Activated CD8-positive, alpha-beta T cell treated with anti-CD3 and anti-CD28 coated beads for 36 hours (primary cell): ENCODE measurements at regions of chr10 and their contacts with region 1.

Region 1: GRCh38 chr10:102476466-102477141 is 25.3 kb upstream of the C10orf95 start:
- DNase-seq: peak; percentile 35
- ATAC-seq: no peak
- H3K4me3 Mint-ChIP-seq: no peak overlapping the region
- H3K27ac Mint-ChIP-seq: peak overlapping the region; percentile 77
- H3K4me1 Mint-ChIP-seq: peaks cover 29% of the 10 kb centered on the region
- H3K27me3 Mint-ChIP-seq: no peaks in the 10 kb centered on the region
- CTCF ChIP-seq: no peak

Region 2: GRCh38 chr10:102384053-102384452 is 92.6 kb before region 1 on chr10:
- CTCF ChIA-PET with region 1: interaction called, 26 read pairs
- POLR2A ChIA-PET with region 1: interaction called, 4 read pairs
- intact Hi-C with region 1: no loop called
- DNase-seq: peak; percentile 49
- ATAC-seq: peak; percentile 49
- H3K4me3 Mint-ChIP-seq: no peak overlapping the region
- H3K27ac Mint-ChIP-seq: no peak overlapping the region
- H3K4me1 Mint-ChIP-seq: peaks cover 3% of the 10 kb centered on the region
- H3K27me3 Mint-ChIP-seq: no peaks in the 10 kb centered on the region
- CTCF ChIP-seq: peak; percentile 29

Region 3: DNA sequence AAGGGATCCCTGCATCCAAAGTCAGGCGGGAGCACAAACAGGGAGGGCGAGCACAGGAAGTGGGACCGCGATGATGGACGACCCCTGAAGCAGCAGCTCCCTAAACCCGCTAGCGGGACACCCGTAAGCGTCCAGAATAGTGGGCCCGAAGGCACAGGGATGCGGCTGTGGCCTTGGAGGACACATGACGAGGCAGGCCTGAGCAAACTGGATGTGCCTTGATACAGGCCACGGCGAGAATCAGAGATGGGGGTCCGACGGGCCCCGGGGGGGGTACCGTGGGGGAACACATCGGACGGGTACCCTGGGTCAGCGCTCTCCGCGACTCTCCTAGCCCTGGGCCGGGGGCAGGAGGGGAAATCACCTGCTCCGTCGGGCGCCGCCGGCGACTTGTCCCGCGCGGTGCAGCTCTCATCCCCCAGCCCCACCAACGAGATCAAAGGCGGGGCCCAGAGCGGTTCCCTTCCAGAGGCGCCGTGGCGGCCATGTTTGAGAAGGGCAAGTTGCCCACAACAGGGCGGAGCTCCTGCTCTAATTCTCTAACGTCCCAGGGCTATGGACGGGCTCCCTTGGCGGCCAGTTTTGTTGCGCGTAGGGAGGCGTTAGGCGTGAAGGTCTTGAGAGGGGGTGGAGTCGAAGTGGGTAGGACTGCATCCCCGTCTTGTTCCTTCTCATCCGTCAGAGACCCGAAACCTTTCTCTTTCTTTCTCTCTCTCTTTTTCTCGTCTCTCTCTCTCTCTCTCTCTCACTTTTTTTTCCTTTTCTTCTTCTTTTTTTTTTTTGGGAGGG is 44.2 kb before region 1 on chr10 and contains the start of gene CUEDC2:
- CTCF ChIA-PET with region 1: interaction called, 14 read pairs
- POLR2A ChIA-PET with region 1: interaction called, 5 read pairs
- intact Hi-C with region 1: no loop called
- DNase-seq: peak; percentile 98
- ATAC-seq: peak; percentile 93
- H3K4me3 Mint-ChIP-seq: peak within 1 kb of the TSS; percentile 95
- H3K27ac Mint-ChIP-seq: peak within 1 kb of the TSS; percentile 94
- H3K4me1 Mint-ChIP-seq: peaks cover 42% of the 10 kb centered on the region
- H3K27me3 Mint-ChIP-seq: no peaks in the 10 kb centered on the region
- CTCF ChIP-seq: no peak
- total RNA-seq, gene CUEDC2: 71.8 to 76.4 TPM

Region 4: GRCh38 chr10:102461187-102462054 is 15.2 kb before region 1 on chr10:
- CTCF ChIA-PET with region 1: interaction called, 40 read pairs
- POLR2A ChIA-PET with region 1: interaction called, 7 read pairs
- intact Hi-C with region 1: no loop called
- DNase-seq: peak; percentile 95
- ATAC-seq: peak; percentile 96
- H3K4me3 Mint-ChIP-seq: peak overlapping the region; percentile 91
- H3K27ac Mint-ChIP-seq: peak overlapping the region; percentile 80
- H3K4me1 Mint-ChIP-seq: peaks cover 27% of the 10 kb centered on the region
- H3K27me3 Mint-ChIP-seq: no peaks in the 10 kb centered on the region
- CTCF ChIP-seq: no peak

Region 5: DNA sequence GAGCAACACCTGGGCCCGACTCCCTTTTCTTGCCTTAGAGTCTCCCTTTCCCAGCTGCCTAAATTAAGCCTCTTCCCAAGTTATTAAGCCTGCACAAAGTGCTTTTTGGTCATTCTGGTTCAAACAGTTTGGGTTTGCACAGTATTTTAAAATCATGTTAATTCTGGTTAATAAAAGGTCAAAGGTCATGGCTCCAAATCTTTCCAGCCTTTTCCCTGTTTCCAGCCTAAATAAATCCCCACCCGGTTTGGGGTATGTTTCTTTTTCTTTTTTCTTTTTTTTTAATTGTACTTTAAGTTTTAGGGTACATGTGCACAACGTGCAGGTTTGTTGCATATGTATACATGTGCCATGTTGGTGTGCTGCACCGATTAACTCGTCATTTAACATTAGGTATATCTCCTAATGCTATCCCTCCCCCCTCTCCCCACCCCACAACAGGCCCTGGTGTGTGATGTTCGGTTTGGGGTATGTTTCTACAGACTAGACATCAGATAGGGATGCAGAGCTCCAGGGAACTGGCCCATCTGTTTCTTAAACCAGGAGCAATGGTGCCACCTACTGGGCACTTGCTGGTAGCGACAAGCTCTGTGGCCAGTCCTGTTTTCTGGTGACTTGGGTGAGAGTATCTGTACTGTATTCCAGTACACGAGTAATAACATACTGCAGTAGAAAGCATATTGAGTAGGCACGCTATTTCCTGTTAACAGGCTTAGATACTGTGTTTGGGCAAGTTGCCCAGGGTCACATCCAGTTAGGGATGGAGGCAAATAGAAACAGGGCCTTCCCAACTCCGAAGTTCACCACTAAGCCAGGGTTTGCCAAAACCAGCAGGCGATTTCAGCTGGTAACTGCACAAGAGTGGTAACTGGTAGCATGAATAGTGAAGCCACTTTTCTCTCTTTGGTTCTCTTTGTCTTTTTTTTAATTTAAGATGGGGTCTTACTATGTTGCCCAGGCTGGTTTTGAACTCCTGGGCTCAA is 107.1 kb after region 1 on chr10:
- CTCF ChIA-PET with region 1: interaction called, 10 read pairs
- POLR2A ChIA-PET with region 1: no interaction called
- intact Hi-C with region 1: no loop called
- DNase-seq: peak; percentile 92
- ATAC-seq: peak; percentile 99
- H3K4me3 Mint-ChIP-seq: no peak overlapping the region
- H3K27ac Mint-ChIP-seq: no peak overlapping the region
- H3K4me1 Mint-ChIP-seq: peaks cover 4% of the 10 kb centered on the region
- H3K27me3 Mint-ChIP-seq: no peaks in the 10 kb centered on the region
- CTCF ChIP-seq: peak; percentile 91

Region 6: DNA sequence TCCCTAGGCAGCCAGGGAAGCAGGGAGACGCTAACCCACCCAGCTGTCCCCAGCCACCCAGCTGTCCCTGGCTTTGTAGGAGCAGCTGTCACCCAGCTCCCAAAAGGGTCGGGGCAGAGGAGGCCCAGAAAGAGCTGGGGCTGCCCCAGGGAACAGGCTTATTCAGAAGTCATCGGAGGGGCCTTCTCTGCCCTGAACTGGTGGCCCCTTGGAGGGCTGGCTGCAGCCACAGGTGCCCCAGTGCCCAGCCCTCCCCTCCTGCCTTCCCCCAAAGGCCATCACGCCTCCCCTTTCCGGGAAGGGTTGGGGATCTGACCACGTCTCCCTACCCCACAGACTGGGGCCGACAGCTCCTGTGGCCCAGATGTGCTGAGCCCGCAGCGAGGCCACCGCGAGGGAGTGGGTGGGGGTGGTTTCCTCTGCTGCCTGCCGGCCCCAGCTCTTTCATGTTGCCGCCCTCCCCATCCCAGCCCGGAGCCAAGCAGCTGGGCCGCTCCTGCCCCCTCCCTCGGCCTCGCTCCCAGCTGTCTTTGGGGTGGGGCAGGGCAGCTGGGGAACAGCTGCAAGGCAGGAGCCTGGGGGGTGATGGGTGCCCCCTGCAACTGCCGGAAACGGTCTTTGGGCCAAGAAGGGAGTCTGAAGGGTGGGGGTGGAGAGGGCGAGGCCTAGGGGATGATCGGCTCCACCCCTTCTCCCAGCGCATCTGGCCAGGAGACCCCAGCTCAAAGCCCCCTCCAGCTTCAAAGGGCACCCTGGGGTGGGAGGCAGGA is 184.5 kb after region 1 on chr10:
- CTCF ChIA-PET with region 1: no interaction called
- POLR2A ChIA-PET with region 1: no interaction called
- intact Hi-C with region 1: no loop called
- DNase-seq: peak; percentile 93
- ATAC-seq: peak; percentile 83
- H3K4me3 Mint-ChIP-seq: peak overlapping the region; percentile 61
- H3K27ac Mint-ChIP-seq: peak overlapping the region; percentile 91
- H3K4me1 Mint-ChIP-seq: peaks cover 45% of the 10 kb centered on the region
- H3K27me3 Mint-ChIP-seq: no peaks in the 10 kb centered on the region
- CTCF ChIP-seq: no peak

Region 7: GRCh38 chr10:102752934-102753664 is 276.5 kb after region 1 on chr10:
- CTCF ChIA-PET with region 1: no interaction called
- POLR2A ChIA-PET with region 1: no interaction called
- intact Hi-C with region 1: no loop called
- DNase-seq: peak; percentile 34
- ATAC-seq: peak; percentile 76
- H3K4me3 Mint-ChIP-seq: no peak overlapping the region
- H3K27ac Mint-ChIP-seq: no peak overlapping the region
- H3K4me1 Mint-ChIP-seq: peaks cover 48% of the 10 kb centered on the region
- H3K27me3 Mint-ChIP-seq: no peaks in the 10 kb centered on the region
- CTCF ChIP-seq: peak; percentile 50